ENCODE measurements at regions of chr2 and their contacts with region 1.

Region 1: DNA sequence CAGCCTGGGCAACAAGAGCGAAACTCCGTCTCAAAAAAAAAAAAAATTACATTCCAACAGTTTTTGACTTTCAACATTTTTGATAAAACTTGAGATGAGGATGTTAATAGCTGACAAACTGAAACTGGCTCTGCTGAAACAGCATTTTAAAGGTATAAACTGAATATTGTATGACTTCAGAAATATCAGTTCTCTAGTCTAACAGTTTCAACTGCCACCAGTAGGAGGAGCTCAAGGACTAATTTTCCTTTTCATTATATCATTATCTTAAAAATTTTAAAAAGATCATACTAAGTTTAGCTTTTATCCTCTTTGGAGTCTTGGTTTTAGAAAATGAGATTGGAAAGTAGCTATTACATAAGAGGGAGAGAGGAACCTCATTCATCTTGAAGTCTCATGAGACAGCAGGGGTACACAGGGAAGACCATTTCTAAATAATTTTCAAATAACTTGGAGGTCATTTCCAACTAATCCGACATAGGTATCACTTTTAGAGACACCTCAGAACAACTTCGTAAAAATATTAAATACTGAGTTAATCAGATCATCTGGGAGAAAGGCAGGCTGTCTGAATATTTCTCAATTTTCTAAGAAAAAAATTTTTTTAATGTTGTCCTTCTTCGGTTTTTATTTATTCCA is 37.6 kb upstream of the MCM6 start:
- DNase-seq: peak; percentile 66
- ATAC-seq: peak; percentile 64
- H3K4me3 Mint-ChIP-seq: no peak overlapping the region
- H3K27ac Mint-ChIP-seq: peak overlapping the region; percentile 57
- H3K4me1 Mint-ChIP-seq: peaks cover 14% of the 10 kb centered on the region
- H3K27me3 Mint-ChIP-seq: no peaks in the 10 kb centered on the region
- CTCF ChIP-seq: peak; percentile 89

Region 2: DNA sequence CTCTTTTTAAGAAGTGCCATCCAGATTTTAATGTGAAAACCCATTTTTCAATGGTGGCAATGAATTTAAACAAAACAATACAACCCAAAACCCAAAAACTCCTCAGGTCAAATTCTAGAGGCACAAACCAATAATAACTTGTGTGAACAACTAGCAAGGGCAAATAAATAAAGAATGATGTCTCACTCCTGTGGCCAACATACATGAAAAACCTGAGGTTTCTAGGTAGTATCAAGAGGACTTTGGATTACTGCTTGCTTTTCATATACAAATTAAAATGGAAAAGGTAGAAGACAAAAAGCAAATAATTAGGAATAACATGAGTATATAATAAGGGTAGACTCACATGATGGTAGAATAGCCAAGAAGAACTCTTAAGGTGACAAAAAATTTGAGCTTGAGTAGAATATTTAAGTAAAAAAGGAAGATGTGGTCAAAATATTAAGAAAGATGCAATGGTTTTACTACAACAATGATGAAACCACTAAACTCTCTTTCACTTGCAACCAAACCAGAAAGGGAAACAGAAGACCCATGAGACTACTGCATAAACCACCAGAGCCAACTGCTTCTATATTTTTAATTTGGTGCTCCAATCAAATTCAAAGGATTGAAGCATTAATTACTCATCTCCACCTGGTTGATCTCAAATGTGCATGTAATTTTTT is 18.1 kb after region 1 on chr2:
- CTCF ChIA-PET with region 1: interaction called, 12 read pairs
- POLR2A ChIA-PET with region 1: no interaction called
- intact Hi-C with region 1: no loop called
- DNase-seq: no peak
- ATAC-seq: peak; percentile 30
- H3K4me3 Mint-ChIP-seq: no peak overlapping the region
- H3K27ac Mint-ChIP-seq: peak overlapping the region; percentile 59
- H3K4me1 Mint-ChIP-seq: peaks cover 29% of the 10 kb centered on the region
- H3K27me3 Mint-ChIP-seq: no peaks in the 10 kb centered on the region
- CTCF ChIP-seq: no peak

Region 3: GRCh38 chr2:135985018-135985825 is 71.4 kb after region 1 on chr2 and contains the start of gene DARS1:
- CTCF ChIA-PET with region 1: interaction called, 14 read pairs
- POLR2A ChIA-PET with region 1: interaction called, 4 read pairs
- intact Hi-C with region 1: loop called (anchors 10 kb)
- DNase-seq: peak; percentile 93
- ATAC-seq: peak; percentile 85
- H3K4me3 Mint-ChIP-seq: peak within 1 kb of the TSS; percentile 90
- H3K27ac Mint-ChIP-seq: peak within 1 kb of the TSS; percentile 97
- H3K4me1 Mint-ChIP-seq: peaks cover 45% of the 10 kb centered on the region
- H3K27me3 Mint-ChIP-seq: no peaks in the 10 kb centered on the region
- CTCF ChIP-seq: no peak
- total RNA-seq, gene DARS1: 210 to 211 TPM

Region 4: DNA sequence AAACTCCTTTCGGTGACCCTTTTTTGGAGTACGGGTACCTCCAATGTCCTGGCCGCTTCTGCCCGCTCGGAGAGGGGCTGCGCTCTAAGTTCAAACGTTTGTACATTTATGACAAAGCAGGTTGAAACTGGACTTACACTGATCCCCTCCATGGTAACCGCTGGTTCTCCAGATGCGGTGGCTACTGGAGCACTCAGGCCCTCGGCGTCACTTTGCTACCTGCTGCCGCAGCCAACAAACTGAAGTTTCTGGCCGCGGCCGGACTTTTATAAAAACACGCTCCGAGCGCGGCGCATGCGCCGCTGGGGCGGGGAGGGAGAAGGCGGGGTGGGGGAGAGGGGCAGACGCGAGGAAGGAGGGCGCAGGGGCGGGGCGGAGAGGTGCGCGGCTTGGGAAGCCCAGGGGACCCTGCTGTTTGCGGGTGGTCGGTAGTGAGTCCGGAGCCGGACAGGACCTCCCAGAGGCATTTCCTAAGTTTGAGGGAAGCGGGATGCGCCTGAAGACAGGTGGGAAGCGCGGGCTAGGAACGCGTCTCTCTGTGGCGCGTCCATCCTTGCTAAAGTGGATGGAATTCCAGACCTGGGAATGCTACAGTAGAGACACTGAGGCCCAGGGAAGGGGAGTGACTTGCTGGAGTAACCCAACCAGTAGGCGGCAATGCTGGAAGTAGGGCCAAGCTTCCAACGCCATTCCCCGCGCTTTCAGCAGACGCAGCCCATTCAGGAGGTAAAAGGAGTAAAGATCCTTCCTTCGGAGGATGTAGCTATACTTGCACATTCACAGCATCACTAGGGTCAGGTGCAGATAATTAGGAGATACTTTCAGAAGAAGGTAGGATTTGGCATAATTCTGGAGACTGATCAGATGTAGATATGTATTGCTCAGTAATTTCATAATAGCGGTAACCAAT is 204.3 kb after region 1 on chr2 and contains the start of gene CXCR4:
- CTCF ChIA-PET with region 1: interaction called, 8 read pairs
- POLR2A ChIA-PET with region 1: no interaction called
- intact Hi-C with region 1: loop called (anchors 5 kb)
- DNase-seq: peak; percentile 87
- ATAC-seq: peak; percentile 40
- H3K4me3 Mint-ChIP-seq: peak within 1 kb of the TSS; percentile 96
- H3K27ac Mint-ChIP-seq: peak within 1 kb of the TSS; percentile 95
- H3K4me1 Mint-ChIP-seq: peaks cover 56% of the 10 kb centered on the region
- H3K27me3 Mint-ChIP-seq: no peaks in the 10 kb centered on the region
- CTCF ChIP-seq: no peak
- total RNA-seq, gene CXCR4: 97.0 to 103 TPM

Region 5: DNA sequence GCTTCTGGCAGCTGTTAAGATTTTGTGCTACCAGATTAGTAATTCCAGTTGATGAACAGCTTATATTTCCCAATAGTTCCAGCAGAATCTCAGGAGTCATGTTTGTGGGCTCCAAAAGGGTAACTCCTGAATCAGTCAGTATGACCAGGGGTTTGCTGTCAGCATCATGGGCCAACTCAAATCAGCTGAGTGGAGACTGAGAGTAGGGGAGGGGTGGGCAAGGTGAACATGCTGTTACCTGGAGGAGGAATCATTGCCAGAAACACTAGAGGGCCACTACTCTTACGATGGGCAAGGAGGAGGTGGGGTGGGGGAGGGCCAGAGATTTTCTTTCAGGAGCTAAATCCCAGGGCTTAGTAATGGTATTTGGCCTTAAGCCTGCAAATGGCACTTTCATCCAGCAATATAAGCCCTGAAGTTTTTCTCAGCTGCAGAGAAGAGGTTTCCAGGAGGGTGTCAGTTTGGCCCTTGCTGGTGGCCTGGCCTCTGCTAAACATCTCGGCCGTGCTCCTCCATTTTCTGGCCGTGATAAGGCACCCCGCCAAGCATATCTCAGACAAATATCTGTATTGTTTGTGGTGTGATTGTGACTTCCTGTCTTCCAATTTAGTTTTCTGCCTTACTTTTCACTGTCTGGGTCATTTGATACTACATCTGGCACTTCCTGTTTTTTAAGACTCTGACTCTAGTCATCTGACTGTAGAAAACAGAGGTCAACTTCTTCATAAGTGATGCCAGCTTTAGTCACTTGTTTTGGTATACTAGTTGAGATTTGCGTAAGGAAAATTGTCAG is 324.6 kb after region 1 on chr2:
- CTCF ChIA-PET with region 1: interaction called, 3 read pairs
- POLR2A ChIA-PET with region 1: no interaction called
- intact Hi-C with region 1: loop called (anchors 10 kb)
- DNase-seq: peak; percentile 48
- ATAC-seq: peak; percentile 77
- H3K4me3 Mint-ChIP-seq: peak overlapping the region; percentile 4
- H3K27ac Mint-ChIP-seq: peak overlapping the region; percentile 88
- H3K4me1 Mint-ChIP-seq: peaks cover 54% of the 10 kb centered on the region
- H3K27me3 Mint-ChIP-seq: no peaks in the 10 kb centered on the region
- CTCF ChIP-seq: no peak

Region 6: GRCh38 chr2:136378712-136379595 is 465.1 kb after region 1 on chr2:
- CTCF ChIA-PET with region 1: interaction called, 44 read pairs
- POLR2A ChIA-PET with region 1: interaction called, 3 read pairs
- intact Hi-C with region 1: loop called (anchors 1 kb)
- DNase-seq: peak; percentile 86
- ATAC-seq: no peak
- H3K4me3 Mint-ChIP-seq: no peak overlapping the region
- H3K27ac Mint-ChIP-seq: no peak overlapping the region
- H3K4me1 Mint-ChIP-seq: peaks cover 82% of the 10 kb centered on the region
- H3K27me3 Mint-ChIP-seq: no peaks in the 10 kb centered on the region
- CTCF ChIP-seq: peak; percentile 90

Region 7: DNA sequence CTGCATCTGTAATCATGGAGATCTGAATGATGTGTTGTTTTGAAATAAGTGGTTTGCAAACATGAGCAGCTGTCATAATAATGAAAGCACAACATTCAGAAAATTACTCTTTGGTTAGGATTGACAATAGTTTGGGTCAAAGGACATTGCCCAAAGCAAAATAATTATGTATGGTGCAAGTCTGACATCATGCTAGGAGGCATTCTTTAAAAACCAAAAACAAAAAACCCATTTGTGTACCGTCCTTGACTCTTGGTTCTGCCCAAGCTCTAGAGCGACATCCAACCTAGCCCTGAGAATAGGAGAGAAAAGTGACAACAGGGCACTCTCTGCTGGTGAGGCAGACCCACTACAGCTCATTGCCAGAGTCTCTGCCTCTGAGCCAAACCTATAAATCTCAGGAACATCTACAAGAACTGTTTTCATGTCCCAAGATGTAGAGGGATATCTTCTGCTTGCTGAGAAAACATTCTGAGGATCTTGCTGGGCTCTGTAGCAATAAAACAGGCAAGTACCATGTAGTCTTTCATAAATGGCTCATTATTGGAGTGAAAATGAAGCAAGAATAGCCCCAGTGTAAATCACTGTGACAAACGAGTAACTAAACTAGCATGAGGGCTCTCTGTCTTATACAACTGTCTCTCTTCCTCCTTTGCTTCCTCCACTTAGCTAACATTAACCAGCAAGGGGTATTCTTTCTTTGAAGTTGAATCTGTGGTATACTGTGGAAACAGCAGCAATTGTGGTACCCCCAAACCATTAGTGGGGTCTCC is 470.9 kb after region 1 on chr2:
- CTCF ChIA-PET with region 1: interaction called, 44 read pairs
- POLR2A ChIA-PET with region 1: interaction called, 3 read pairs
- intact Hi-C with region 1: loop called (anchors 1 kb)
- DNase-seq: peak; percentile 61
- ATAC-seq: peak; percentile 50
- H3K4me3 Mint-ChIP-seq: no peak overlapping the region
- H3K27ac Mint-ChIP-seq: peak overlapping the region; percentile 35
- H3K4me1 Mint-ChIP-seq: peaks cover 43% of the 10 kb centered on the region
- H3K27me3 Mint-ChIP-seq: no peaks in the 10 kb centered on the region
- CTCF ChIP-seq: peak; percentile 89